ENCODE measurements at regions of chr12 and their contacts with region 1.

Region 1: GRCh38 chr12:10235761-10236631 is 23.3 kb downstream of the GABARAPL1 start:
- DNase-seq: no peak
- H3K4me3 Mint-ChIP-seq: no peak overlapping the region
- H3K27ac Mint-ChIP-seq: no peak overlapping the region
- H3K4me1 Mint-ChIP-seq: peaks cover 15% of the 10 kb centered on the region
- H3K27me3 Mint-ChIP-seq: peaks cover 13% of the 10 kb centered on the region

Region 2: GRCh38 chr12:10283027-10283426 is 47.0 kb after region 1 on chr12:
- intact Hi-C with region 1: no loop called
- DNase-seq: no peak
- H3K4me3 Mint-ChIP-seq: no peak overlapping the region
- H3K27ac Mint-ChIP-seq: no peak overlapping the region
- H3K4me1 Mint-ChIP-seq: peaks cover 5% of the 10 kb centered on the region
- H3K27me3 Mint-ChIP-seq: peaks cover 18% of the 10 kb centered on the region

Region 3: DNA sequence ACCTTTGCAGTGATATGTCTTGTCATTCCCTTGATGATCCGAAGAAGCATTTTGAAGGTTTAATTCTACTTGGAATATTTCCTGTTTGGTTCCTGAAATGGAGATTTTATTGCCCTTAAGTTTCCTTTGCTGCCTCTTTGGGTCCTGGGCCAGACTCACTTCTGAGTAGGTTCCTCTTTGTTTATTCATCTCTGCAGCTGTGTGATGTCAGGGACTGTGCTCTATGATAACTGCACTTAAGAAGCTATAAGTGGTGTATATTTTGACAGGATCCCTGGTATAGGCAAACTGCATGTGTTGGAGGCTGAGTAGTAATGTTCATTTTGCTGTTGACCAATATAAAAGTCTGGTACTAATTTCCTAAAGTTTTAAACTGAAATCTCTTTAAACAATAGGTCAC is 173.4 kb after region 1 on chr12 and contains the start of gene KLRC4:
- intact Hi-C with region 1: loop called (anchors 10 kb)
- DNase-seq: no peak
- H3K4me3 Mint-ChIP-seq: no peak within 1 kb of the TSS
- H3K27ac Mint-ChIP-seq: no peak within 1 kb of the TSS
- H3K4me1 Mint-ChIP-seq: no peaks in the 10 kb centered on the region
- H3K27me3 Mint-ChIP-seq: peaks cover 16% of the 10 kb centered on the region
- total RNA-seq, gene KLRC4: not detected in 2 replicates

Region 4: DNA sequence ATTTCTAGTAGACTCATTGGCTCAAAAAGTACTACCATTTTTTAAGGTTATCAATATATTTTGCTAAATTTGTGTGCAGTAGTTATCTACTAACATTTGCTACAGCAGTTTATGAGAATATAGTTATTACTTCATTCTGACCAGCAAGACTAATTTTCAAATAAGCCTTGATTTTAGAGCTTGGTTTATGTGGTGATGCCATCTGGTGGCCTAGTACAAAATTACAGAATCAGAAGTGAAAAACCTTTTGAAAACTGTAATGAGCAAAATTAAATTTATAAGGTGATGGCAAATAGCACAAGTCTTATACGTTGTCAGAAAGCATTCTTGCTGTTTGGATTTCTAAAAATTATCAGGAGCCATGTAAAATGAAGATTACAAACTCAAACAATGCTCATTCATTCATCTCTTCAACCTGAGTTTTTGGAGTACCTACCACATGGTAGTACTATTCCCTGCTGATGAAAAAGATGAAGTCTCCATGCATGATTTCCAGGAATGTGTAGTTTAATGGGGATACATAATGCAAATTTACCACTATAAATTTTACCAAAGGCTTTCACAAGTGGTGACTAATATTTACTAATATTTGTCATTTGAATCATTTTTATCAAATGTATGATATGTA is 326.4 kb after region 1 on chr12:
- intact Hi-C with region 1: loop called (anchors 1 kb)
- DNase-seq: no peak
- H3K4me3 Mint-ChIP-seq: no peak overlapping the region
- H3K27ac Mint-ChIP-seq: no peak overlapping the region
- H3K4me1 Mint-ChIP-seq: peaks cover 4% of the 10 kb centered on the region
- H3K27me3 Mint-ChIP-seq: peaks cover 38% of the 10 kb centered on the region

Region 5: DNA sequence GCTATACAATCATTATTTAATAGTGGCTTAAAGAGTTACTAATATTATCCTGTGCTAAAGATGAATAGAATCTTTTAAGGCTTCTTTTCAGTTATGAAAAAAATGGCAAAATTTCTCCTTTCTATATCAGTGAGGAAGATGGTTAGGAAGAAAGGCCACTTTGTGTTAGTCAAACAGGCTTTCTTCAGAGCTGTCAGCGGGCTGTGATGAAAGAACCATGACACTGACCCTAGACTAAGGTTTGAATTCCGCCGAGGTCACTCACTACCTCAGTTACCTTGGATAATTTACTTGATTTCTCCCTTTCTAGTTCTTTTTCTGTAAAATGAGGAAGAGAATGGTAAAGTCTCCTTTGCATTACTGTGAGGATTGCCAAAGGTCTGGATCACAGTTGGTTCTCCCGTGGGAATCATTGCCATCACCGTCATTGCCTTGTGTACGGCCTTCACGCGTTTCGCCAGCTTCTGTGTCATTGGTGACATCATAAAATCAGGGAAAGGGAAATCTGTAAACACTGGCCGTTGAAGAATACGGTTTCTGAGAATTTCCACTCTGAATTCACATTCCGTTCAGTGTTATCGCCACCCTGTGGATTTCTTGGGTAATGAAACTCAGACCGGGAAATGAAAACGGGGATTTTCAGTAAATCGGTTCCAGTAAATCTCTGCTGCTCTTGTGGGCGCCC is 513.8 kb after region 1 on chr12:
- intact Hi-C with region 1: loop called (anchors 1 kb)
- DNase-seq: peak; percentile 66
- H3K4me3 Mint-ChIP-seq: peak overlapping the region; percentile 62
- H3K27ac Mint-ChIP-seq: peak overlapping the region; percentile 34
- H3K4me1 Mint-ChIP-seq: peaks cover 36% of the 10 kb centered on the region
- H3K27me3 Mint-ChIP-seq: peaks cover 24% of the 10 kb centered on the region

Measured in activated T-helper 1 cell treated with anti-CD3 and anti-CD28 coated beads, Interleukin-12 subunit alpha, Interleukin-12 subunit beta, Interleukin-2, Interleukin-4 antibody, amounts not matched to agents 30 ng/mL and 10 ng/mL and 1 ng/mL, durations not matched to agents 14 hours and 24 hours and 36 hours (primary cell).